Thyroid gland (tissue), 4 donors: ENCODE measurements at regions of chr11 and their contacts with region 1.

Region 1: GRCh38 chr11:123110356-123110755 is 48.4 kb upstream of the HSPA8 start:
- DNase-seq: peak; percentile 78 to 80
- H3K4me3 ChIP-seq: no peak overlapping the region
- H3K27ac ChIP-seq: peak overlapping the region in 1 of 3 donors; percentile 9
- H3K4me1 ChIP-seq: peaks cover 0 to 17% of the 10 kb centered on the region in 2 donors
- H3K27me3 ChIP-seq: no peaks in the 10 kb centered on the region
- CTCF ChIP-seq: no peak
- POLR2A ChIP-seq: no peak

Region 2: GRCh38 chr11:122917311-122917710 is 193.0 kb before region 1 on chr11:
- intact Hi-C with region 1: no loop called
- DNase-seq: peak; percentile 92 to 93
- H3K4me3 ChIP-seq: no peak overlapping the region
- H3K27ac ChIP-seq: no peak overlapping the region
- H3K4me1 ChIP-seq: peaks cover 0 to 3% of the 10 kb centered on the region in 2 donors
- H3K27me3 ChIP-seq: no peaks in the 10 kb centered on the region
- CTCF ChIP-seq: no peak
- POLR2A ChIP-seq: no peak

Region 3: DNA sequence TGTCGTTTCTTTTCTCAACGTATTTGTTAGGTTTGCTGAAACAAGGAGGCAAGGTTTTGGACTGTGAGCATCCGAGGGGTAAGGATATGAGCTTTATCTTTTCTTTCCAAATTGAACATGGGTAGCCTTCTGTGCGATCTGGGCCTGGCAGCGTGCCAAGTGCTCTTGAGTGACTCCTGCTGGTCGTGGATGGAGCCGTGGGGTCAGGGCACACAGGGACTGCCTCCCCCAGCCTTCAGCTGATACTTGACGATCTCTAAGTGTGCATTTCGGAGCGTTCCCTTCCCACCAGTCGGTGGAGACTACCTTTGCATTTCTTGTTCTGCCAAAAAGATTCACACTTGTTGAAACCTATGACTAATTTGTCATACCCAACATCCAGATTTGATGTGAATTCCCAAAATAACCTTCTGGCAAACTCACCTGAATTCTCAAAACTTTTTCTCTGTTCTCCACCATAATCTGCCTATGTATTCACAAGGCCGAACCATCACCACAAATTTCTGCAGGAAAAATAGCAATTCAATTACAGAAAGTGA is 124.8 kb after region 1 on chr11:
- intact Hi-C with region 1: no loop called
- DNase-seq: peak; percentile 49 to 60
- H3K4me3 ChIP-seq: no peak overlapping the region
- H3K27ac ChIP-seq: peak overlapping the region; percentile 15 to 58 (median 26)
- H3K4me1 ChIP-seq: peaks cover 7 to 8% of the 10 kb centered on the region in 2 donors
- H3K27me3 ChIP-seq: no peaks in the 10 kb centered on the region
- CTCF ChIP-seq: peak; percentile 10 to 86 (median 52)
- POLR2A ChIP-seq: no peak

Region 4: GRCh38 chr11:123246749-123247495 is 136.6 kb after region 1 on chr11:
- intact Hi-C with region 1: loop called (anchors 5 kb)
- DNase-seq: peak; percentile 84 to 90
- H3K4me3 ChIP-seq: no peak overlapping the region
- H3K27ac ChIP-seq: no peak overlapping the region
- H3K4me1 ChIP-seq: peaks cover 0 to 3% of the 10 kb centered on the region in 2 donors
- H3K27me3 ChIP-seq: no peaks in the 10 kb centered on the region
- CTCF ChIP-seq: peak; percentile 92 to 99 (median 96)
- POLR2A ChIP-seq: no peak